Natural killer cell (primary cell): ENCODE measurements at regions of chr1 and their contacts with region 1.

Region 1: GRCh38 chr1:904310-904950 is 19.3 kb upstream of the SAMD11 start:
- DNase-seq: peak; percentile 92
- ATAC-seq: peak; percentile 93 to 95 (median 93)
- H3K4me3 ChIP-seq: peak overlapping the region; percentile 30
- H3K4me3 Mint-ChIP-seq: peak overlapping the region; percentile 73
- H3K27ac ChIP-seq: no peak overlapping the region
- H3K27ac Mint-ChIP-seq: peak overlapping the region in 1 of 2 donors; percentile 56
- H3K4me1 ChIP-seq: peaks cover 16% of the 10 kb centered on the region
- H3K4me1 Mint-ChIP-seq: peaks cover 6 to 12% of the 10 kb centered on the region in 2 donors
- H3K27me3 ChIP-seq: peaks cover 9% of the 10 kb centered on the region
- H3K27me3 Mint-ChIP-seq: peaks cover 0 to 24% of the 10 kb centered on the region in 2 donors
- CTCF ChIP-seq: peak; percentile 75

Region 2: GRCh38 chr1:861714-862113 is 42.7 kb before region 1 on chr1:
- intact Hi-C with region 1: no loop called
- DNase-seq: no peak
- ATAC-seq: no peak
- H3K4me3 ChIP-seq: no peak overlapping the region
- H3K4me3 Mint-ChIP-seq: no peak overlapping the region
- H3K27ac ChIP-seq: no peak overlapping the region
- H3K27ac Mint-ChIP-seq: no peak overlapping the region
- H3K4me1 ChIP-seq: peaks cover 7% of the 10 kb centered on the region
- H3K4me1 Mint-ChIP-seq: no peaks in the 10 kb centered on the region
- H3K27me3 ChIP-seq: peaks cover 3% of the 10 kb centered on the region
- H3K27me3 Mint-ChIP-seq: peaks cover 0 to 9% of the 10 kb centered on the region in 2 donors
- CTCF ChIP-seq: no peak

Region 3: DNA sequence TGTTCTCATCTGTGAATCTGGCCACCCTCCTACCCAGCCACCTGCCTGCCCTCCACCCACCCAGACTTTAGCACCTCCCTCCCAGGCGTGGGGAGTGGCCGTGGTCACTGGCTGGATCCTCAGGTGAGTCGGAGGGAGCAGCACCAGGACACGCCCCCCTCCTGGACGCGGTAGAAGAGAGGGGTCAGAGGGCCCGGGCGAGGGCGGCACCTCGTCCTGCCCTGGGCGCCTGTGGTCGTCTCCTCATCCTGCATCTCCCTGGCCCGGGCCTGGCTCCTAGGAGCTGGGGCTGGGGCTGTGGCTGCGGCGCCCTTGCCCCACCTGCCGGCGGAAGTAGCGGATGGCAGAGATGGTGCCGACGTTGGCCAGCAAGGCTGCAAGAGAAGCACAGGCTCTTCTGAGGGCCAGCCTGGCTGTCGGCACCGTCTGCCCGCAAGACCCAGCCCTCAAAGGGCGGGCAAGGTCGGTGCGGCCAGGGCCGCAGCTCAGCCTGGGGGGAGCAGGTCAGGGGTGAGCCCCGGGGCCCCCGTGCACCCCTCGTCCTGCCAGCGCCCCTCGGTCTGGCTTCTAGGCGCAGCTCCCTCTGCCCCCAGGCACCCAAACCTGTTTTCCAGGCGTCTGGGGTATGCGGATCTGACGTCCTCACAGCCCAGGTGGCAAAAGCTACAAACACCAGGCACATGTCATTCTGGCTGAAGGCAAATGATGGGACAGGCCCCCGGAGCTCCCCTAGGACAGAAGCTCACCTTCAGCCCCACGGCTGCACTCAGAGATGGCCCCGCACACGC is 71.7 kb after region 1 on chr1:
- intact Hi-C with region 1: loop called (anchors 1 kb)
- DNase-seq: peak; percentile 61 to 83
- ATAC-seq: peak; percentile 63 to 97 (median 88)
- H3K4me3 ChIP-seq: peak overlapping the region; percentile 3
- H3K4me3 Mint-ChIP-seq: peak overlapping the region; percentile 29
- H3K27ac ChIP-seq: no peak overlapping the region
- H3K27ac Mint-ChIP-seq: peak overlapping the region in 1 of 2 donors; percentile 68
- H3K4me1 ChIP-seq: peaks cover 12% of the 10 kb centered on the region
- H3K4me1 Mint-ChIP-seq: peaks cover 0 to 8% of the 10 kb centered on the region in 2 donors
- H3K27me3 ChIP-seq: peaks cover 8% of the 10 kb centered on the region
- H3K27me3 Mint-ChIP-seq: peaks cover 0 to 12% of the 10 kb centered on the region in 2 donors
- CTCF ChIP-seq: peak; percentile 50